ENCODE measurements at regions of chr3 and their contacts with region 1.

Region 1: GRCh38 chr3:121924734-121925133 is 30.5 kb downstream of the SLC15A2 start:
- DNase-seq: peak in 1 of 2 experiments; percentile 53
- H3K4me3 ChIP-seq: no peak overlapping the region
- H3K4me3 Mint-ChIP-seq: no peak overlapping the region
- H3K27ac Mint-ChIP-seq: no peak overlapping the region
- H3K4me1 ChIP-seq: peaks cover 20% of the 10 kb centered on the region
- H3K4me1 Mint-ChIP-seq: peaks cover 28% of the 10 kb centered on the region
- H3K27me3 ChIP-seq: no peaks in the 10 kb centered on the region; the same call in none of the 2 replicates
- H3K27me3 Mint-ChIP-seq: peaks cover 15% of the 10 kb centered on the region
- CTCF ChIP-seq: no peak

Region 2: DNA sequence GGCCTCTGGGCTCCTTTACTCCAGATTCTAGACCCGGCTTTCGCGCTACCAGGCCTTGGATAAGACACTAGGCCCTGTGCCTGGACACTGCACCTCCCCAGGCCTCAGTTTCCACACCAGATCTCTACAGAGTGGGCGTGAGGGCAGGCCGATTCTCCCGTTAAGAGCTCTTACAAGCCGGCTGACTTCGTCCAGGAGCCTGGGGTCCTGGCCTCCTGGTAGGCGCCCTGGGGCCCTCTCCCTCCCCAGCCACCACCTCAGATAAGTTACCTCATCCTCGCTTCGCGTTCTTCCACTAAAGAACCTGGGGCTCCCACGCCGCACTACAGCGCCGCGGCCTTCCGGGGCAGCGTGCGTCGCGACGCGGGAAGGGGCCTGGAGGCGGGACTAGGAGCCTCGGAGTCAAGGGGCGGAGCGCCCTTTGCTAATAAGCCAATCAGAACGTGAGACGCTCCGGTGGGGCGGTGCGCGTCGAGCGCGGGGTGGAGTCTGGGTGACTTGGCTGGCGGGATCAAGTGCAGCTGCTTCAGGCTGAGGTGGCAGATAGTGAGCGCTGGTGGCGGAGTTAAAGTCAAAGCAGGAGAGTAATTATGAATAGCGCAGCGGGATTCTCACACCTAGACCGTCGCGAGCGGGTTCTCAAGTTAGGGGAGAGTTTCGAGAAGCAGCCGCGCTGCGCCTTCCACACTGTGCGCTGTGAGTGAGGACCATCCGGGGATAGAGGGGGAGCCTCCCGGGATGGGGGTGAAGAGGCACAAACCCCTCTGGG is 89.9 kb before region 1 on chr3 and contains the starts of genes EAF2 and IQCB1:
- CTCF ChIA-PET with region 1: no interaction called
- POLR2A ChIA-PET with region 1: no interaction called
- intact Hi-C with region 1: loop called (anchors 1 kb)
- DNase-seq: peak; percentile 95 to 96
- H3K4me3 ChIP-seq: peak within 1 kb of the TSS; percentile 66
- H3K4me3 Mint-ChIP-seq: peak within 1 kb of the TSS; percentile 93
- H3K27ac Mint-ChIP-seq: peak within 1 kb of the TSS; percentile 68
- H3K4me1 ChIP-seq: peaks cover 7% of the 10 kb centered on the region
- H3K4me1 Mint-ChIP-seq: peaks cover 12% of the 10 kb centered on the region
- H3K27me3 ChIP-seq: no peaks in the 10 kb centered on the region
- H3K27me3 Mint-ChIP-seq: peaks cover 3% of the 10 kb centered on the region
- CTCF ChIP-seq: no peak
- total RNA-seq, gene EAF2: 4.5 and 4.6 TPM in 2 replicates
- total RNA-seq, gene IQCB1: 36.1 and 36.4 TPM in 2 replicates

Region 3: DNA sequence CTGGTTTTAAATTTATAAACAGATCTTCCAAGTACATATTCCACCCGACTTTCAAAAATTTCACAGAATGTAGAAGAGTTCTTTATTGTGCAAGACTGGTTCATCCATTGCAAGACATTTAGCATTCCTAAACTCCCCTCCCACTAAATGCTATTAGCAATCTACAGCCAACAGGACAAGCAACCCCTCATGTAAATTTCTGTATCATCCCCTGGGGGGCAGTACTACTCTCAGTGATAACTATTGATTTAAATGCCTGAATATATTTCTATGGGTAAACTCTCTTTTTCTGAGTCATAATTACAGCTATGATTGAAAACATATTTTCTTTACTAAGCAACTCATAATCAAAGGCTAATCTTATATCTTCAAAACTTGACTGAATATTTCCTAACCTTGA is 41.2 kb before region 1 on chr3:
- CTCF ChIA-PET with region 1: no interaction called
- POLR2A ChIA-PET with region 1: no interaction called
- intact Hi-C with region 1: loop called (anchors 2 kb)
- DNase-seq: peak in 1 of 2 experiments; percentile 51
- H3K4me3 ChIP-seq: no peak overlapping the region
- H3K4me3 Mint-ChIP-seq: no peak overlapping the region
- H3K27ac Mint-ChIP-seq: no peak overlapping the region
- H3K4me1 ChIP-seq: peaks cover 11% of the 10 kb centered on the region
- H3K4me1 Mint-ChIP-seq: peaks cover 19% of the 10 kb centered on the region
- H3K27me3 ChIP-seq: no peaks in the 10 kb centered on the region
- H3K27me3 Mint-ChIP-seq: no peaks in the 10 kb centered on the region
- CTCF ChIP-seq: peak in 1 of 2 experiments; percentile 55

Region 4: DNA sequence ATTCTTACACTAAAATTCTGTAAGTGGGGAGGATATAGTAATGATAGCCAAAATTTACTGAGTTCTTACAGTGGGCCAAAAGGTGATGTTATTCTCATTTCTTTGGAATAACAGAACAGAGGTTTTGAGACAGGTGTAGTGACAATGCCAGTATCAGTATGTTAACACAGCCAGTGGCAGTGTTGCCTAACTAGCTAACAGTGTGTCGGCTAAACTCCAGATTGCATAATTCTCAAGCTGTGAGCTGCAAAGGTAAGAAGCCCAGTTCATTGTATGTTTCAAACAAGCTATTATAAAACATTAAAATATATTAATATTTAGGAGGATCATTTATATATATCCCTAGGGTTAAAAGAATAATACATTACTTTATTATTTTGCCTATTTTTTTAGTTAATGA is 29.6 kb before region 1 on chr3:
- CTCF ChIA-PET with region 1: interaction called, 3 read pairs
- POLR2A ChIA-PET with region 1: no interaction called
- intact Hi-C with region 1: loop called (anchors 1 kb)
- DNase-seq: peak in 1 of 2 experiments; percentile 49
- H3K4me3 ChIP-seq: no peak overlapping the region
- H3K4me3 Mint-ChIP-seq: no peak overlapping the region
- H3K27ac Mint-ChIP-seq: no peak overlapping the region
- H3K4me1 ChIP-seq: peaks cover 58% of the 10 kb centered on the region
- H3K4me1 Mint-ChIP-seq: peaks cover 29% of the 10 kb centered on the region
- H3K27me3 ChIP-seq: no peaks in the 10 kb centered on the region
- H3K27me3 Mint-ChIP-seq: no peaks in the 10 kb centered on the region
- CTCF ChIP-seq: no peak